Activated CD8-positive, alpha-beta T cell treated with anti-CD3 and anti-CD28 coated beads for 36 hours (primary cell): ENCODE measurements at regions of chr3 and their contacts with region 1.

Region 1: GRCh38 chr3:12796171-12797123 is at the start of gene CAND2:
- DNase-seq: peak; percentile 53
- ATAC-seq: peak; percentile 81
- H3K4me3 Mint-ChIP-seq: peak within 1 kb of the TSS; percentile 70
- H3K27ac Mint-ChIP-seq: no peak within 1 kb of the TSS
- H3K4me1 Mint-ChIP-seq: peaks cover 3% of the 10 kb centered on the region
- H3K27me3 Mint-ChIP-seq: peaks cover 3% of the 10 kb centered on the region
- CTCF ChIP-seq: no peak
- total RNA-seq, gene CAND2: 1.5 to 1.9 TPM

Region 2: GRCh38 chr3:12782172-12782815 is 14.2 kb before region 1 on chr3:
- CTCF ChIA-PET with region 1: interaction called, 13 read pairs
- POLR2A ChIA-PET with region 1: interaction called, 8 read pairs
- intact Hi-C with region 1: no loop called
- DNase-seq: peak; percentile 34
- ATAC-seq: no peak
- H3K4me3 Mint-ChIP-seq: no peak overlapping the region
- H3K27ac Mint-ChIP-seq: no peak overlapping the region
- H3K4me1 Mint-ChIP-seq: no peaks in the 10 kb centered on the region
- H3K27me3 Mint-ChIP-seq: peaks cover 10% of the 10 kb centered on the region
- CTCF ChIP-seq: no peak

Region 3: DNA sequence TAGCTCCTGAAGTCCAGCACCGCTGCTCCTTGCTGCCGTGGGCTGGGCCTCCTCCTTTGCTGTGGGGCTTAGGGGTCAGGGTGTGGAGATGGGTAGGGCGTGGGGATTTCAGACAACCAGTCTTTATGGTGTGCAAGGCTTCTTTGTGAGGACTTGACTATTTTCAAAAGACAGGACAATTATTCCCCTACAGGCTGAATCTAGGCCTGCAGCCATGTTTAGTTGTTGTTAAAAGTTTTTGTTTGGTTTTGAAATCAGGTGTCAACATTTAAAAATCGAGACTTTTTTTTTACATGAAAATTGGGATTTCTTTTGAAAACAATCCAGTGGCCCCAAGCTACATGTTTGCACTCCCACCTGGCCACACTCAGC is 34.3 kb after region 1 on chr3:
- CTCF ChIA-PET with region 1: no interaction called
- POLR2A ChIA-PET with region 1: interaction called, 23 read pairs
- intact Hi-C with region 1: no loop called
- DNase-seq: no peak
- ATAC-seq: no peak
- H3K4me3 Mint-ChIP-seq: no peak overlapping the region
- H3K27ac Mint-ChIP-seq: no peak overlapping the region
- H3K4me1 Mint-ChIP-seq: no peaks in the 10 kb centered on the region
- H3K27me3 Mint-ChIP-seq: no peaks in the 10 kb centered on the region
- CTCF ChIP-seq: peak; percentile 49

Region 4: GRCh38 chr3:12967606-12968351 is 171.3 kb after region 1 on chr3:
- CTCF ChIA-PET with region 1: no interaction called
- POLR2A ChIA-PET with region 1: no interaction called
- intact Hi-C with region 1: no loop called
- DNase-seq: peak; percentile 90
- ATAC-seq: peak; percentile 95
- H3K4me3 Mint-ChIP-seq: peak overlapping the region; percentile 71
- H3K27ac Mint-ChIP-seq: no peak overlapping the region
- H3K4me1 Mint-ChIP-seq: peaks cover 51% of the 10 kb centered on the region
- H3K27me3 Mint-ChIP-seq: no peaks in the 10 kb centered on the region
- CTCF ChIP-seq: no peak